ENCODE measurements at regions of chr10 and their contacts with region 1.

Region 1: DNA sequence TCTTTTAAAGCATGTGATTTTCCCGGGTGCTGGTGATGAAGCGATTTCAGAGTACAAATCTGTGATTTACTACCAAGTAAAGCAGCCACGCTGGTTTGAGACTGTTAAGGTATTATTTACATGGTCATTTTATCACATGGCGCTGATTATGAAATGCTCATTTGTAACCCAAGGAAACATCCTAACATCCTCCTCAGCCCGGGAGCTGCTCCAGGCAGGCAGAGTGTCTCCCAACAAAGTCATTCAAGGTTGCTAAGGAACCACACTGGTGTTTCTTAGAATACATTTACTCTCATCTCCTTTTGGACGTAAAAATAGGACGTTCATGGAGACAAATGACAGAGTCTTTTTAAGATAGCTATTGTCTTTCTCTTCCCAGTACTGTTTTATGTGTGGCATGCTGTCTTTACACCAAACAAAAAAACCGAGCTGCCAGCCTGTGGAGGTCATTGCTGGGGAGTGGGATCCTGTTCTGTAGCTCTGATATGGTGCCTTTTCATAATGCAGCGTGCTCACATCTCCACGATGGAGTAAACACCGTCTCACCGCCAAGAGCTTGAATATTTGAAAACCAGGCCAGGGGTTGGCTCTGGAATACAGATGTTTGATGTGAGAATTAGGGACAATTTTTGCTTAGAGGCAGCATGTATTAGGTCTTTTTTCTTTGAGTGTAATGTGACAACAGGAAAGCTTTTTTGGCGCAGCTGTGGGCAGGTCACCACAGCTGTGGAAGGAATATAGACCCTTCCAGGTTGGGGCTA is 119.6 kb downstream of the DOCK1 start:
- DNase-seq: no peak
- H3K4me3 ChIP-seq: no peak overlapping the region
- H3K27ac ChIP-seq: peak overlapping the region; percentile 64 to 80 (median 74)
- H3K4me1 ChIP-seq: peaks cover 0 to 17% (median 17%) of the 10 kb centered on the region in 4 donors
- H3K27me3 ChIP-seq: no peaks in the 10 kb centered on the region
- CTCF ChIP-seq: no peak
- EP300 ChIP-seq: no peak
- POLR2A ChIP-seq: no peak

Region 2: GRCh38 chr10:126867567-126868365 is 157.1 kb before region 1 on chr10:
- intact Hi-C with region 1: no loop called
- DNase-seq: no peak
- H3K4me3 ChIP-seq: no peak overlapping the region
- H3K27ac ChIP-seq: no peak overlapping the region
- H3K4me1 ChIP-seq: no peaks in the 10 kb centered on the region
- H3K27me3 ChIP-seq: no peaks in the 10 kb centered on the region
- CTCF ChIP-seq: no peak
- EP300 ChIP-seq: no peak
- POLR2A ChIP-seq: no peak

Region 3: GRCh38 chr10:126904819-126905686 is 119.8 kb before region 1 on chr10 and contains the start of gene DOCK1:
- intact Hi-C with region 1: loop called (anchors 10 kb)
- DNase-seq: no peak
- H3K4me3 ChIP-seq: peak within 1 kb of the TSS; percentile 73 to 97 (median 86)
- H3K27ac ChIP-seq: peak within 1 kb of the TSS; percentile 74 to 86 (median 83)
- H3K4me1 ChIP-seq: peaks cover 21 to 48% (median 33%) of the 10 kb centered on the region in 4 donors
- H3K27me3 ChIP-seq: no peaks in the 10 kb centered on the region
- CTCF ChIP-seq: no peak
- EP300 ChIP-seq: no peak
- POLR2A ChIP-seq: no peak
- total RNA-seq, gene DOCK1: 41.4 to 60.3 (median 55.3) TPM